Sigmoid colon (tissue), 7 donors: ENCODE measurements at regions of chr15 and their contacts with region 1.

Region 1: GRCh38 chr15:56821721-56822425 is 88.6 kb upstream of the ZNF280D start:
- DNase-seq: peak; percentile 74
- H3K4me3 ChIP-seq: no peak overlapping the region
- H3K27ac ChIP-seq: no peak overlapping the region
- H3K4me1 ChIP-seq: peaks cover 0 to 9% (median 2%) of the 10 kb centered on the region in 4 donors
- H3K27me3 ChIP-seq: no peaks in the 10 kb centered on the region
- CTCF ChIP-seq: peak; percentile 42 to 70 (median 56)
- EP300 ChIP-seq: no peak
- POLR2A ChIP-seq: no peak

Region 2: DNA sequence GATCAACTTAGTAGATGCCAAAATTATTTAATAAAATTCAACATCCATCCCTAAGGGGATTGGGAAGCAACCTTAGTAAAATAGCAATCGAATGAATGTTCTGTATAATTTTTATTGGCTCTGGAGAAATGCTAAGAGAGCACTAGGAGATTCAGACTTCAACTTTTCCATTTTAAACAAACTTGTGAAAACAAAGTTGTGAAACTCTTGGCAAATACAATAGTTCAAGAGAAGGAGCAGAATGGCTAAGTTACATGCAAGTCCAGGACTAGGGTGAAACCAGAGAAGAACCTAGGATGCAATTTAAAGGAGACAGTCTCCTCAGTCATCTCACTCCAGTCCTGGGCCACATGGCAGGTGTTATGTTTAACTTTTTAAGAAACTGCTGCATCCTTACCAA is 71.9 kb before region 1 on chr15:
- intact Hi-C with region 1: no loop called
- DNase-seq: no peak
- H3K4me3 ChIP-seq: no peak overlapping the region
- H3K27ac ChIP-seq: peak overlapping the region in 1 of 4 donors; percentile 2
- H3K4me1 ChIP-seq: no peaks in the 10 kb centered on the region
- H3K27me3 ChIP-seq: no peaks in the 10 kb centered on the region
- CTCF ChIP-seq: no peak
- EP300 ChIP-seq: no peak
- POLR2A ChIP-seq: no peak

Region 3: GRCh38 chr15:56869573-56869972 is 47.7 kb after region 1 on chr15:
- intact Hi-C with region 1: loop called (anchors 1 kb)
- DNase-seq: peak; percentile 72
- H3K4me3 ChIP-seq: no peak overlapping the region
- H3K27ac ChIP-seq: no peak overlapping the region
- H3K4me1 ChIP-seq: peaks cover 0 to 21% (median 16%) of the 10 kb centered on the region in 4 donors
- H3K27me3 ChIP-seq: no peaks in the 10 kb centered on the region
- CTCF ChIP-seq: peak; percentile 18 to 51 (median 32)
- EP300 ChIP-seq: no peak
- POLR2A ChIP-seq: no peak

Region 4: GRCh38 chr15:57218826-57219576 is 397.1 kb after region 1 on chr15:
- intact Hi-C with region 1: loop called (anchors 5 kb)
- DNase-seq: no peak
- H3K4me3 ChIP-seq: peak overlapping the region in 1 of 4 donors; percentile 4
- H3K27ac ChIP-seq: no peak overlapping the region
- H3K4me1 ChIP-seq: peaks cover 0 to 56% (median 27%) of the 10 kb centered on the region in 4 donors
- H3K27me3 ChIP-seq: no peaks in the 10 kb centered on the region
- CTCF ChIP-seq: no peak
- EP300 ChIP-seq: no peak
- POLR2A ChIP-seq: no peak

Region 5: GRCh38 chr15:57306161-57306943 is 484.5 kb after region 1 on chr15:
- intact Hi-C with region 1: loop called (anchors 10 kb)
- DNase-seq: peak; percentile 89
- H3K4me3 ChIP-seq: peak overlapping the region; percentile 30 to 58 (median 51)
- H3K27ac ChIP-seq: peak overlapping the region in 2 of 4 donors; percentile 12 to 27
- H3K4me1 ChIP-seq: peaks cover 0 to 16% (median 14%) of the 10 kb centered on the region in 4 donors
- H3K27me3 ChIP-seq: no peaks in the 10 kb centered on the region
- CTCF ChIP-seq: peak; percentile 68 to 86 (median 78)
- EP300 ChIP-seq: no peak
- POLR2A ChIP-seq: no peak